Heart right ventricle (tissue), 16 donors: ENCODE measurements at regions of chr11 and their contacts with region 1.

Region 1: GRCh38 chr11:125369808-125370207 is 126.3 kb downstream of the FEZ1 start:
- DNase-seq: no peak
- ATAC-seq: no peak
- H3K4me3 ChIP-seq: no peak overlapping the region
- H3K27ac ChIP-seq: no peak overlapping the region
- H3K4me1 ChIP-seq: peaks cover 0 to 41% (median 20%) of the 10 kb centered on the region in 9 donors
- H3K27me3 ChIP-seq: peaks cover 0 to 20% (median 0%) of the 10 kb centered on the region in 7 donors
- CTCF ChIP-seq: no peak

Region 2: DNA sequence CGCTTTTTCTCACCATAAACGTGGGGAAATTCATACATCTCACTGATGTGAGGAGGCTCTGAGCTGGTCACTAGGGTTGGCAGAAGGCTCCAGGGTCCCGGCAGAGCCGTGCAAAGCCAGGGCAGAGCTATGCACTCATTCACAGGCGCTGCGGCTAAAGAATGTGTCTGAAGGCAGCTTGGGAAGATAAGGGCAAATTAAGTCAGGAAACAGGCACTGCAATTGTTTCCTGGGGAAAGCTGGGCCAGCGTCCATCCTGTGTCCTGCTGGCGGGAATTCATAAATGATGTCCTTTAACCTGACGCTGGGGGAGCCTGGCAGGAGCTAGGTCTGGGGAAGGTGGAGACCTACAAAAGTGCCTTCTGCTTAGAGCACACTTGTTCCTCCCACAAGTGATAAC is 177.6 kb before region 1 on chr11:
- intact Hi-C with region 1: no loop called
- DNase-seq: no peak
- ATAC-seq: peak in 5 of 8 donors; percentile 33 to 61 (median 46)
- H3K4me3 ChIP-seq: no peak overlapping the region
- H3K27ac ChIP-seq: no peak overlapping the region
- H3K4me1 ChIP-seq: peaks cover 0 to 12% (median 6%) of the 10 kb centered on the region in 9 donors
- H3K27me3 ChIP-seq: peaks cover 0 to 8% (median 3%) of the 10 kb centered on the region in 7 donors
- CTCF ChIP-seq: no peak

Region 3: DNA sequence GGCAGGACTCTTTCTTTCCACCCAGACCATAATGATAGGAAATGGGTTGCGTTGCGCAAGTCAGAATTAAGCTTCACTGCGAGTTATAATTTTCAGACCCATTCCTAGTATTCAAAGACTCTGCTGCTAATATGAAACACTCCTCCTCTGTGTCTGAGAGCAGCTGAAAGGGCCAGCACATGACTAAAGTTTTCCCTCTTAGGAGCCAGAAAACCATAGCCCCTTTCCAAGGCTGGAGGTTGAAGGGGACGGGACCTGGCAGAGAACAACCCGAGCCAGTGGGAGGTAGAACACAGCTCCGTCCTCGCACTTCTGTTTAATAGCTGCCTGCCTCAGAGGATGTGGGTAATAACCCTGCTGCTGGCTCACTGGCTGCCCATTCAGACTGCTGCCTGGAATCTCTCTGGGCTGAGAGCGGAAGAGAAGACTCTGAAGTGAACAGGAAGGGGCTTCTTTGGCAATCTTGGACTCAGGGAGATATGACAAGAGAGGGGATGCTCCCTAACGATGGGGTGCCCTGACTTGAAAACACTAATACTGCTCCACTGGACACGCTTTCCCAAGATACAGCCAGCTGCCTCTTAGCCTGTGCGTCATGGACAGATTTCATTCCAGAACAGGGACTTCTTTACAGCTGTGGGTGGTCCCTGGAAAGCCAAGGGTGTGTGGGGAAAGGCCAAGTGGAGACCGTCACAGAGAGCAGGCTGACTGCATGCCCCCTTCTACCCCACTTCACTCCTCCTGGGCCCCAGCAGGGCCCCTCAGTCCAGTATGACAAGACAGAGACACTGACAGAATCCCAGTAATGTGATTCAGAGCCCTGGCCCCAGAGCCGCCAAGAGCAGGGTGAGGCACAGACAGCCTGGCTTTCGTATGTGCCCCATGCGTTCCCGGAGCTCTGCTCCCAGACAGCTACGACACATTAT is 30.7 kb before region 1 on chr11:
- intact Hi-C with region 1: loop called in 1 of 10 experiments (anchors 1 kb)
- DNase-seq: peak in 1 of 2 donors; percentile 65
- ATAC-seq: peak; percentile 72 to 87 (median 82)
- H3K4me3 ChIP-seq: no peak overlapping the region
- H3K27ac ChIP-seq: peak overlapping the region; percentile 47 to 83 (median 74)
- H3K4me1 ChIP-seq: peaks cover 0 to 31% (median 12%) of the 10 kb centered on the region in 9 donors
- H3K27me3 ChIP-seq: no peaks in the 10 kb centered on the region
- CTCF ChIP-seq: no peak